PC-9 (cell line): ENCODE measurements at regions of chrX and their contacts with region 1.

Region 1: DNA sequence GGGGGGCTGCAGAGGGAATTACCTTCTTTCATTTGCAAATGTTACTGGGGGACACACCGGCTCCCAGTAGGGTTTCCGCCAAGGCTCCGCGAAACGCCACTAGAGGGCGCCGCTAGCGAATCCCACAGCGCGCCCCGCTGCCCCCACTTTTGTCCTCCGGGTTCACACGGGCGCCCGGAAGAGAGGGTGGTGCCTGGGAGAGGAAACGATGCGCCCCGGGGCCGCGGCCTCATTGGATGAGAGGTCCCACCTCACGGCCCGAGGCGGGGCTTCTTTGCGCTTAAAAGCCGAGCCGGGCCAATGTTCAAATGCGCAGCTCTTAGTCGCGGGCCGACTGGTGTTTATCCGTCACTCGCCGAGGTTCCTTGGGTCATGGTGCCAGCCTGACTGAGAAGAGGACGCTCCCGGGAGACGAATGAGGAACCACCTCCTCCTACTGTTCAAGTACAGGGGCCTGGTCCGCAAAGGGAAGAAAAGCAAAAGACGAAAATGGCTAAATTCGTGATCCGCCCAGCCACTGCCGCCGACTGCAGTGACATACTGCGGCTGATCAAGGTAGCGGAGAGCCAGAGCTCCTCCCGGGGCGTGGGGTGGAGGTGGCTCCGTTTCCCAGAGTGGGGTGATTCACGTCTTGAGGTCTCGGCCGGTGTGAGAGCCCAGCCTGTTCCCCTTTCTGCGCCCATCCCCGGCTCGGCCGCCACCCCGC is at the start of gene SAT1:
- DNase-seq: peak; percentile 86 to 95
- H3K4me3 ChIP-seq: peak within 1 kb of the TSS; percentile 94
- H3K27ac ChIP-seq: peak within 1 kb of the TSS; percentile 98
- H3K4me1 ChIP-seq: peaks cover 45% of the 10 kb centered on the region
- H3K27me3 ChIP-seq: no peaks in the 10 kb centered on the region
- CTCF ChIP-seq: peak; percentile 85
- total RNA-seq, gene SAT1: 99.1 and 131 TPM in 2 replicates

Region 2: GRCh38 chrX:21855937-21856415 is 1927.0 kb before region 1 on chrX and contains the start of gene YY2:
- CTCF ChIA-PET with region 1: no interaction called
- POLR2A ChIA-PET with region 1: no interaction called
- intact Hi-C with region 1: no loop called
- DNase-seq: no peak
- H3K4me3 ChIP-seq: no peak within 1 kb of the TSS
- H3K27ac ChIP-seq: no peak within 1 kb of the TSS
- H3K4me1 ChIP-seq: no peaks in the 10 kb centered on the region
- H3K27me3 ChIP-seq: no peaks in the 10 kb centered on the region
- CTCF ChIP-seq: no peak
- total RNA-seq, gene YY2: 2.0 and 2.1 TPM in 2 replicates

Region 3: DNA sequence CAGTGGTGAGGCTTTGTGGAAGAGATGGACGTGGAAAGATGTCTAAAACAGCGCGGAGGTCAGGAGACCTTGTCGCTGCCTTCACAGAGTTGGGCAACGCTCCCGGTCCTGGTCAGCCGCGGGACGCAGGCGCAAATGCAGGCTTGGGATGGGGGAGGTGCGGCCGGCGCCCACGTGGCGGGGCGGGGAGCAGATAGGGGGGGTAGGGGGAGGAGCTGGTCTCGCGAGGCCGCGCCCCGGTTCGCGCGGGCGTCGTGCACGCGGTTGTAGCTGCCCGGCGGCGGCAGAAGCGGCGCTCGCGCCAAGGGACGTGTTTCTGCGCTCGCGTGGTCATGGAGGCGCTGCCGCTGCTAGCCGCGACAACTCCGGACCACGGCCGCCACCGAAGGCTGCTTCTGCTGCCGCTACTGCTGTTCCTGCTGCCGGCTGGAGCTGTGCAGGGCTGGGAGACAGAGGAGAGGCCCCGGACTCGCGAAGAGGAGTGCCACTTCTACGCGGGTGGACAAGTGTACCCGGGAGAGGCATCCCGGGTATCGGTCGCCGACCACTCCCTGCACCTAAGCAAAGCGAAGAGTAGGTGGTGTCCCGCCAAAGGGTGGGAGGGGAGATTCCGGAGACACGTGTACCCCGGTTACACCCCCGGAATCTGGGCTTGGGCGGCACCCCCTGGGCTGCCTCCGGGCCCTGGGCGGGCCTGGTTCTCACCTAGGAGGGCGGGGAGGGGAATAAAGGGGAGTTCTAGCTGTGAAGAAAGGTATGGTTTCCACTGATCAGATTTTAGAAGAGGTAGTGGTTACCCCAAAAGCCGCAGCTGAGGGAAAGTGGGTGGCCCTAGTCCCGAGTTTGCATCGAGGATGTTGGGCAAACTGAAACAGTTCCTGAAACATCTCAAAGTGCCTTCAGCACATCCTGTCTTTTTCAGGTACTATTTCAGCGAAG is 115.5 kb before region 1 on chrX and contains the start of gene PRDX4:
- CTCF ChIA-PET with region 1: interaction called, 12 read pairs
- POLR2A ChIA-PET with region 1: interaction called, 6 read pairs
- intact Hi-C with region 1: no loop called
- DNase-seq: peak; percentile 60 to 87
- H3K4me3 ChIP-seq: peak within 1 kb of the TSS; percentile 61
- H3K27ac ChIP-seq: peak within 1 kb of the TSS; percentile 81
- H3K4me1 ChIP-seq: peaks cover 12% of the 10 kb centered on the region; the same call in 1 of the 2 replicates
- H3K27me3 ChIP-seq: no peaks in the 10 kb centered on the region
- CTCF ChIP-seq: no peak
- total RNA-seq, gene PRDX4: 60.6 and 76.4 TPM in 2 replicates

Region 4: GRCh38 chrX:23742697-23743622 is 40.1 kb before region 1 on chrX and contains the start of gene ACOT9:
- CTCF ChIA-PET with region 1: interaction called, 6 read pairs
- POLR2A ChIA-PET with region 1: no interaction called
- intact Hi-C with region 1: loop called (anchors 1 kb)
- DNase-seq: peak; percentile 93
- H3K4me3 ChIP-seq: peak within 1 kb of the TSS; percentile 84
- H3K27ac ChIP-seq: peak within 1 kb of the TSS; percentile 97
- H3K4me1 ChIP-seq: peaks cover 10% of the 10 kb centered on the region; the same call in 1 of the 2 replicates
- H3K27me3 ChIP-seq: no peaks in the 10 kb centered on the region
- CTCF ChIP-seq: no peak
- total RNA-seq, gene ACOT9: 40.6 and 47.0 TPM in 2 replicates

Region 5: DNA sequence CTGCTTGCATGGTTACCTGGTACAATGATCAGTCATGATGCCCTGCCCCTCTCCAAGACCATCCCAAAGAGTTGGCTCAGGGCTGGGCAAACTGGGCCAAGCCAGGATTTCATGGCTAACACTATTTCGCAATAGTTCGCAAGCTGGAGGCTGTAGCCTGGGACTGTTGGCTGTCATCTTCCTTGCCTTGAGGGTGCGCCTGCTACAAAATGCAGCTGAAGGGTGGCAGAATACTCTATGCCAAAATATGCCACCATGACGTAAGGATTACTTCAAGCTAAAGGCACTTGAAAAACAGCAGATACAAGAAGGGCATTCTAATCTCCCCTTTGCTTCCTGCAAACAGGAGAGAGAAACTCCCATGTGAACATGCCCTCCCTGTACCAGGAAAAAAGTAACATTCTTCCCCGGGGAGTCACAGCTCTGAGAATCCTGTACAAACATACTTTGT is 20.9 kb after region 1 on chrX:
- CTCF ChIA-PET with region 1: no interaction called
- POLR2A ChIA-PET with region 1: interaction called, 14 read pairs
- intact Hi-C with region 1: loop called (anchors 1 kb)
- DNase-seq: peak; percentile 65 to 98
- H3K4me3 ChIP-seq: peak overlapping the region; percentile 22; the same call in 1 of the 2 replicates
- H3K27ac ChIP-seq: peak overlapping the region; percentile 100
- H3K4me1 ChIP-seq: peaks cover 56% of the 10 kb centered on the region
- H3K27me3 ChIP-seq: no peaks in the 10 kb centered on the region
- CTCF ChIP-seq: no peak

Region 6: GRCh38 chrX:23854945-23855344 is 71.9 kb after region 1 on chrX:
- CTCF ChIA-PET with region 1: no interaction called
- POLR2A ChIA-PET with region 1: interaction called, 12 read pairs
- intact Hi-C with region 1: no loop called
- DNase-seq: no peak
- H3K4me3 ChIP-seq: no peak overlapping the region
- H3K27ac ChIP-seq: no peak overlapping the region
- H3K4me1 ChIP-seq: no peaks in the 10 kb centered on the region
- H3K27me3 ChIP-seq: no peaks in the 10 kb centered on the region
- CTCF ChIP-seq: no peak

Region 7: GRCh38 chrX:23901805-23902204 is 118.8 kb after region 1 on chrX:
- CTCF ChIA-PET with region 1: interaction called, 11 read pairs
- POLR2A ChIA-PET with region 1: interaction called, 12 read pairs
- intact Hi-C with region 1: loop called (anchors 1 kb)
- DNase-seq: peak; percentile 22 to 60
- H3K4me3 ChIP-seq: no peak overlapping the region
- H3K27ac ChIP-seq: peak overlapping the region; percentile 91
- H3K4me1 ChIP-seq: peaks cover 52% of the 10 kb centered on the region
- H3K27me3 ChIP-seq: no peaks in the 10 kb centered on the region
- CTCF ChIP-seq: peak; percentile 50

Region 8: DNA sequence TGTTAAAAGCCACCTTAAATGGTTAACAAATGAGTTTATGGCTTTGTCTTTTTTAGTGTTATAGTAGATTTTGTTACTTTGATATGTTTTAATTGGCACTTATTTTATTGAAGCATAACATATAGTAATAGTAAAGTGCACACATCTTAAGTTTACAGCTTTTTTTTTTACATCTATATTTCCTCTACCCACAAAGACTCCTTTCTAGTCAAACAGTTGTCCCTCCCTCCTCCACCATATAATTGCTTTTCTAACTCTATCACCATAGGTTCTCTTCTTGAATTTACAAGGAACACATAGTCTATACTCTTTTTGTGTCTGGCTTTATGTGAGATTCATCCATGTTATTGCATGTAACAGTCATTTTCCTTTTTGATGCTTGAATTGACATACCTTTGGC is 753.5 kb after region 1 on chrX:
- CTCF ChIA-PET with region 1: no interaction called
- POLR2A ChIA-PET with region 1: no interaction called
- intact Hi-C with region 1: no loop called
- DNase-seq: no peak
- H3K4me3 ChIP-seq: no peak overlapping the region
- H3K27ac ChIP-seq: no peak overlapping the region
- H3K4me1 ChIP-seq: no peaks in the 10 kb centered on the region
- H3K27me3 ChIP-seq: no peaks in the 10 kb centered on the region
- CTCF ChIP-seq: no peak